ENCODE measurements at regions of chr10 and their contacts with region 1.

Region 1: GRCh38 chr10:75019370-75019769 is 92.1 kb upstream of the SAMD8 start:
- DNase-seq: no peak
- ATAC-seq: peak; percentile 78
- H3K4me3 ChIP-seq: no peak overlapping the region
- H3K27ac ChIP-seq: no peak overlapping the region
- H3K4me1 ChIP-seq: peaks cover 16% of the 10 kb centered on the region
- H3K27me3 ChIP-seq: no peaks in the 10 kb centered on the region
- CTCF ChIP-seq: peak; percentile 33 to 70 (median 43); a peak in 4 of 6 replicates
- EP300 ChIP-seq: no peak
- POLR2A ChIP-seq: no peak
- RAD21 ChIP-seq: peak; percentile 84

Region 2: DNA sequence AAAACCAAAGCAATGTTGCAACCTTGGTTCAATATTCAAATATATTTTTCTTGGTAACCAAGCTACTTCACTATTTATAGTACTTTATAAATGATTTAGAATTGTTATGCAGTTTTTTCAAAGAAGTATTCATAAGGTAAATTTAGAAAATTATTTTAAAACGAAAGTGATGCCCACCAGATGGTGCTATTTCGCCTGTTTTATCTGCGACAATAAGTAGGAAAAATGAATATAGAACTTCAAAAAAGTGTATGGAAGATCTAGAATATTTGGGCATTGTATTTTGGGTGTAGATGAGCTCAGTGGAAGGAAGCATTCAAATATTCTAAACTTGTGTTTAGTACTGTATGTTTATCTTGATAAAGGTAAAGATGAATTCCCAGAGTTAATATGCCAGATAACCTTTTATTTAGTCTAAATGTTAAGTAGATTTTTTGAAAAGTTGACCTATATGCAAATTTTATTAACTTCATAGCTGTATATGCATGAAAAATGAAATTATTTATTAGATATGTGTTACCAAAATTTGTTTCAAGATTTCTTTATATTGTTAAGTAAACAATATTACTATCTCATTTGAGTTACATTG is 775.2 kb before region 1 on chr10:
- CTCF ChIA-PET with region 1: interaction called, 26 read pairs
- POLR2A ChIA-PET with region 1: no interaction called
- RAD21 ChIA-PET with region 1: interaction called, 23 read pairs
- SMC1A ChIA-PET with region 1: interaction called, 21 read pairs
- in situ Hi-C with region 1: no loop called
- intact Hi-C with region 1: no loop called
- DNase-seq: no peak
- ATAC-seq: no peak
- H3K4me3 ChIP-seq: no peak overlapping the region
- H3K27ac ChIP-seq: no peak overlapping the region
- H3K4me1 ChIP-seq: no peaks in the 10 kb centered on the region
- H3K27me3 ChIP-seq: no peaks in the 10 kb centered on the region
- CTCF ChIP-seq: peak; percentile 16 to 48 (median 40); a peak in 3 of 6 replicates
- EP300 ChIP-seq: no peak
- POLR2A ChIP-seq: no peak
- RAD21 ChIP-seq: peak; percentile 61

Region 3: GRCh38 chr10:74419958-74420375 is 599.4 kb before region 1 on chr10:
- CTCF ChIA-PET with region 1: interaction called, 47 read pairs
- POLR2A ChIA-PET with region 1: no interaction called
- RAD21 ChIA-PET with region 1: interaction called, 10 read pairs
- SMC1A ChIA-PET with region 1: interaction called, 25 read pairs
- in situ Hi-C with region 1: no loop called
- intact Hi-C with region 1: loop called (anchors 10 kb)
- DNase-seq: peak; percentile 5
- ATAC-seq: peak; percentile 84
- H3K4me3 ChIP-seq: no peak overlapping the region
- H3K27ac ChIP-seq: no peak overlapping the region
- H3K4me1 ChIP-seq: no peaks in the 10 kb centered on the region
- H3K27me3 ChIP-seq: no peaks in the 10 kb centered on the region
- CTCF ChIP-seq: peak; percentile 16 to 44 (median 38); a peak in 4 of 6 replicates
- EP300 ChIP-seq: no peak
- POLR2A ChIP-seq: no peak
- RAD21 ChIP-seq: 0 out of 2 replicates have a peak, but pooled peaks have one; percentile 29

Region 4: DNA sequence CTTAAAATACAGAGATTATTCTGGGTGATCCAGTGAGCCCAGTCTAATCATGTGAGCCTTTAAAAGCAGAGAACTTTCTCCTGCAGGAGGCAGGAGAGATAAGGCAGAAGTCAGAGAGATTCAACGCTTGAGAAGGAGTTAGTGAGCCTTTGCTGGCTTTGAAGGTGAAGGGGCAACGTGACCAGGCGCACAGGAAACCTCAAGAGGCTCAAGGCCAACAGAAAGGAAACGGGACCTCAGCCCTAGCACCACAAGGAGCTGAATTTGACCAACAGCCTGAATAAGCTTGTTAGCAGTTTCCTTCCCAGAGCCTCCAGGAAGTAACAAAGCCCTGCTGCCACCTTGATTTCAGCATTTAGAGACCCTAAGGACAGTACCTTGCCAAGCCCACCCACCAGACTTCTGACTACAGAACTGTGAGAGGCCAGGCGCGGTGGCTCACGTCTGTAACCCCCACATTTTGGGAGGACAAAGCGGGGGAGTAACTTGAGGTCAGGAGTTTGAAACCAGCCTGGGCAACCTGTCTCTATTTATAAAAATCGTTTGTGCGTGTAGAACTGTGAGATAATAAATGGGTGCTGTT is 280.3 kb before region 1 on chr10:
- CTCF ChIA-PET with region 1: interaction called, 71 read pairs
- POLR2A ChIA-PET with region 1: no interaction called
- RAD21 ChIA-PET with region 1: interaction called, 60 read pairs
- SMC1A ChIA-PET with region 1: interaction called, 73 read pairs
- in situ Hi-C with region 1: loop called (anchors 5 kb)
- intact Hi-C with region 1: loop called (anchors 1 kb)
- DNase-seq: peak; percentile 94
- ATAC-seq: peak; percentile 93
- H3K4me3 ChIP-seq: peak overlapping the region; percentile 42; the same call in 1 of the 2 replicates
- H3K27ac ChIP-seq: peak overlapping the region; percentile 97
- H3K4me1 ChIP-seq: peaks cover 24% of the 10 kb centered on the region
- H3K27me3 ChIP-seq: no peaks in the 10 kb centered on the region
- CTCF ChIP-seq: peak; percentile 48 to 61 (median 50)
- EP300 ChIP-seq: peak in 1 of 2 experiments; percentile 31; a peak in 2 of 4 replicates
- POLR2A ChIP-seq: no peak
- RAD21 ChIP-seq: peak; percentile 77

Region 5: DNA sequence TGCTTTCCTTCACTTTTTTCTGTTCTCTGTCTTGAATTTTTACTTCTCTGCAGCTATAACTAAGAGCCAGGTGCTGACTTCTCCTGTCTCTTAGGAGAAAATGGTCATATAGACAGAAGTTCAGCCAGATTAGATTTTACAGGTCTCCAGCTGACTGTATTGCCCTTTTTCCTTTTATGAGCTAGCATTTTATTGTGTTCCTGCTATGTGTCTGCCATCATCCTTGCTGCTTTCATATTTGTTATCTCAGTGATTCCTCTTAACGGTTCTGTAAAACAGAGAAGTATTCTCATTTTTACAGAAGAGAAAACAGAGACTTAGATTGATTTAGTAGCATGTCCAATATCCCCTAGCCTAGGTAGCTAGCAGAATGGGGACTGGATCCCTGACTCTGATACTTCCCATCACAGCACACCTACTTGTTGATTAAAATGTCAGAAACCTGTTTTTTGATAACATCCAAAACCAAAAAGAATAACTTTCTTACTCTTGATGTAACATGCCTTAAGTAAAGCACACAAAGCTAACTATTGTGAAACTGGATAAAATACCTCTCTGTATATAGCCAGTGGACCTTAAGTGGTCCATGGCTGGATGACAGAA is 187.8 kb before region 1 on chr10:
- CTCF ChIA-PET with region 1: interaction called, 5 read pairs
- POLR2A ChIA-PET with region 1: no interaction called
- RAD21 ChIA-PET with region 1: interaction called, 12 read pairs
- SMC1A ChIA-PET with region 1: interaction called, 10 read pairs
- in situ Hi-C with region 1: no loop called
- intact Hi-C with region 1: loop called (anchors 2 kb)
- DNase-seq: no peak
- ATAC-seq: no peak
- H3K4me3 ChIP-seq: peak overlapping the region; percentile 41; the same call in 1 of the 2 replicates
- H3K27ac ChIP-seq: peak overlapping the region; percentile 58
- H3K4me1 ChIP-seq: peaks cover 21% of the 10 kb centered on the region
- H3K27me3 ChIP-seq: no peaks in the 10 kb centered on the region
- CTCF ChIP-seq: no peak
- EP300 ChIP-seq: no peak
- POLR2A ChIP-seq: no peak
- RAD21 ChIP-seq: no peak

Region 6: GRCh38 chr10:74921744-74922143 is 97.6 kb before region 1 on chr10:
- CTCF ChIA-PET with region 1: no interaction called
- POLR2A ChIA-PET with region 1: no interaction called
- RAD21 ChIA-PET with region 1: no interaction called
- SMC1A ChIA-PET with region 1: no interaction called
- in situ Hi-C with region 1: no loop called
- intact Hi-C with region 1: no loop called
- DNase-seq: no peak
- ATAC-seq: no peak
- H3K4me3 ChIP-seq: no peak overlapping the region
- H3K27ac ChIP-seq: no peak overlapping the region
- H3K4me1 ChIP-seq: no peaks in the 10 kb centered on the region
- H3K27me3 ChIP-seq: no peaks in the 10 kb centered on the region
- CTCF ChIP-seq: no peak
- EP300 ChIP-seq: no peak
- POLR2A ChIP-seq: no peak
- RAD21 ChIP-seq: no peak

Region 7: DNA sequence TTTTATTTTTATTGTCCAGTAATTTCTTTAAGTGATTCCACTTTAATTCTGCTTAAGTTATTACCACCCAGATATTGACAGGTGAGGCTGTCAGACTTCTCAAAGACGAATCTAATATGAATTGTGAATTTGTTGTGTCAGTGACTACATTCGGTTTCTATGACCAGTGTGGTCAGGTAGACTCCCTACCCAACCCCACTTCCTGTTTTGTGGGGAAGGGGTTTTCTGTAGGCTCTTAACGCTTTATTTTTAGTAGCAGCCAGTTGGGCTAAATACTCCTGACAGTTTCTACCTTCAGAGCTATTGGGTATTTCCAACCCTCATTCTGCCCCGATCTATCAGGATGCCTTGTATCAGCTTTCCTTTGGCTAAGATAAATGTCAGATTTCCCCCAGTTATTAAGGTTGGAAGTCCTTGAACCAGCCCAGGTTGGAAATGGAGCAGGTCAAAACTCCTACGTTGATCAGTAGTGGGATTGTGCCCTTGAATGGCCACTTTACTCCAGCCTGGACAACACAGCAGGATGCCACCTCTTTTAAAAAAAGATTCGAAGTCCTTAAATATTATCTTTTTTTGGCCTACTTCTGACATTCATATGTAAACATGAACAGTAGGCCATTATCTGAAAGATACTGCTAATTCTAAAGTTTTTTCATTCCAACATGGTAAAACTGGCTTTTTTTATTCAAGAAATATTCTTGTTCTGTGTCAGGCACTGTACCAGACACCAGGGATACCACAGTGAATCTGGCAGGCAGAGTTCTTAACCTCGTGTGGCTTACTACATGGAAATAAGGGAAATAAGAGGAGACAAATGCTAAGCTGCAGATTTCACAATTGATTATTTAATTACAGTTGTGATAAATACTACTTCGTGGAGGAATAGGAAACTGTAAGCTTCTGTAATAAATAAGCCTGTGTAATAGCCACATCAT is 41.2 kb before region 1 on chr10:
- CTCF ChIA-PET with region 1: interaction called, 54 read pairs
- POLR2A ChIA-PET with region 1: interaction called, 6 read pairs
- RAD21 ChIA-PET with region 1: interaction called, 13 read pairs
- SMC1A ChIA-PET with region 1: interaction called, 553 read pairs
- in situ Hi-C with region 1: no loop called
- intact Hi-C with region 1: loop called (anchors 1 kb)
- DNase-seq: peak; percentile 86
- ATAC-seq: peak; percentile 92
- H3K4me3 ChIP-seq: peak overlapping the region; percentile 41
- H3K27ac ChIP-seq: peak overlapping the region; percentile 81
- H3K4me1 ChIP-seq: peaks cover 42% of the 10 kb centered on the region
- H3K27me3 ChIP-seq: no peaks in the 10 kb centered on the region
- CTCF ChIP-seq: no peak
- EP300 ChIP-seq: peak; percentile 98 to 99
- POLR2A ChIP-seq: no peak
- RAD21 ChIP-seq: peak; percentile 20; the same call in 1 of the 2 replicates

Region 8: DNA sequence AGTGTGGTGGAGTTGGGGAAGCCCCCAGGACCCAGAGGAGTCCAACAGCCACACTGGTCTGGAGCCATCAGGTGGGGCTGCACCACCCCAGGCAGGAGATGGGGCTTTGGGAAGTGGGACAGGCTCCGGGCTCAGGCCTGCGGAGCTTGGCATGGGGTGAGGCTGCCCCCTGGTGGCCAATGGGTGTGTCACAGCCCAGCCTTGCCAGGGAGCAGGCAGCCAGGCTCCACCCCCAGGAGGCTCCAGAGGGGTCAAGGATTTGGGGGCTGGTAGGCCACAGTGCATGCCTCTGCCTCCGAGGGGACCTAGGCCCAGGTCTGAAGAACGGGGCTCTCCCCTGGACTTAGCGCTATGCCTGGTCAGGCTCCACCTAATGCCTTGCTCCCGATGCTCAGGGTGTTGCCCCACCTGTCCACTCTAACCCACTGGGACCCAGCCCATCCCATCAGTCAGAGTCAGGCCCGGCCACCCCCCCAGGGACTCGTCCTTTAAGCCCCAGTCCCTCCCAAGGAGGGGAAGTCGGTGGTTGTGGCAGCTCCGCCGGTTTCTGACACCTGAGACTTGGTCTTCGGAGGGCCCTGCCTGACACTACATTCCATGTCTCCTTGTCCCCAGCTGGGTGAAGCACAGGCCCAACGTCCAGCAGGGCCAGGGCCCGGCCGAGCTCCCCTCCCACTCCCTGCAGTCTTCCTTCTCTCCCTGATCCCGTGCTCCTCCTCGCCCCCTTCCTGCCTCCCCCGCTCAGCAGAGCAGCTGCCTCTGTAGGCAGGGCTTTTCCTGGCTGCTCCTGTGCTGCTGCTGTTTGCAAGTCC is 80.8 kb after region 1 on chr10:
- CTCF ChIA-PET with region 1: interaction called, 12 read pairs
- POLR2A ChIA-PET with region 1: no interaction called
- RAD21 ChIA-PET with region 1: interaction called, 10 read pairs
- SMC1A ChIA-PET with region 1: interaction called, 11 read pairs
- in situ Hi-C with region 1: no loop called
- intact Hi-C with region 1: no loop called
- DNase-seq: no peak
- ATAC-seq: peak; percentile 98
- H3K4me3 ChIP-seq: no peak overlapping the region
- H3K27ac ChIP-seq: no peak overlapping the region
- H3K4me1 ChIP-seq: no peaks in the 10 kb centered on the region; the same call in 1 of the 2 replicates
- H3K27me3 ChIP-seq: no peaks in the 10 kb centered on the region
- CTCF ChIP-seq: peak; percentile 94 to 99 (median 98)
- EP300 ChIP-seq: no peak
- POLR2A ChIP-seq: no peak
- RAD21 ChIP-seq: peak; percentile 98